ENCODE measurements at regions of chr19 and their contacts with region 1.

Region 1: DNA sequence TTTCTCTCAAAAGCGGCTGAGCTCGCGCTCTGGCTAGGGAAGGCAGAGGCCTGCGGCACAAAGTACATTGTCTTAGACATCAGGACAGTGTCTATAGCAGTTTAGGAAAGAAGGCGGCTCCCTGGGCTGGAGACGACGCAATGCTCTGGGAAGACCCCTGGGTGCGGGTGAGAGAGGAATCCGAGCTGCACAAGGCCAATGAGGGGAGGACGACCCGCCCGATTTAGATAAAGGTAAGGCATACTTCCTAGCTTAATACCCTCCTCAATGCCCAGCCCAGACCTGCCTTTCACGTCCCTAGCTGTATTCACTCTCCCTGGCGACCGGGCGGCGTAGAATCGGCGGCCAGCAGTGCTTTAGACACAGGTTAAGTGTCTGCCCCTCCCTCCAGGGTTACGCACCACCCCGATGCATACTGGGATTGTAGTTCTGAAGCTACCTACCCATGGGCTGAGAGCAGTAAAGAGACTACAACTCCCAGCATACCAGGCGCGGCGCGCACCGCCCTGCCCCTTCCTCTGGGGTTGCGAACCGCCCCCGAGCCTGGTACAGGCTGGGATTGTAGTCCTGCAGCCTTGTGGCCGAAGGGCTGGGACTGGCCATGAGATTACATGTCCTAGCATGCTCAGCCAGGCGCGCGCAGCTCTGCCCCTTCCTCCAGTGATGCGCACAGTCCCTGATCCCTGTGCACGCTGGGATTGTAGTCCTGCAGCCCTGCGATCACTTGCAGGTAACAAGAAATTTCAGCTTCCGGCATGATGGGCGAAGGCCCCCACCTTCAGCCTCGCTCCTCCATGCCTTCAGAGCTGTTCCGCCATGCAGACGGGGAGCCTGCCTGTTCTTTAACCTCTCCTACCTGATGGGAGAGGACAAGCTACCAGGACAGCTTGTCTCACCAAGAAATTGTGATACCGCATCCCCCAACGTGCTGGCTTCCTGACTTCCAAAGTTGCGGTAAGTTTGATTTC is 43.4 kb upstream of the ZNF14 start:
- DNase-seq: peak; percentile 94
- H3K4me3 Mint-ChIP-seq: peak overlapping the region; percentile 82
- H3K27ac Mint-ChIP-seq: peak overlapping the region; percentile 69
- H3K4me1 Mint-ChIP-seq: no peaks in the 10 kb centered on the region
- H3K27me3 Mint-ChIP-seq: no peaks in the 10 kb centered on the region
- CTCF ChIP-seq: no peak

Region 2: GRCh38 chr19:18021121-18021755 is 1755.1 kb before region 1 on chr19:
- CTCF ChIA-PET with region 1: no interaction called
- intact Hi-C with region 1: no loop called
- DNase-seq: peak; percentile 83
- H3K4me3 Mint-ChIP-seq: no peak overlapping the region
- H3K27ac Mint-ChIP-seq: peak overlapping the region; percentile 82
- H3K4me1 Mint-ChIP-seq: peaks cover 31% of the 10 kb centered on the region
- H3K27me3 Mint-ChIP-seq: no peaks in the 10 kb centered on the region
- CTCF ChIP-seq: no peak

Region 3: DNA sequence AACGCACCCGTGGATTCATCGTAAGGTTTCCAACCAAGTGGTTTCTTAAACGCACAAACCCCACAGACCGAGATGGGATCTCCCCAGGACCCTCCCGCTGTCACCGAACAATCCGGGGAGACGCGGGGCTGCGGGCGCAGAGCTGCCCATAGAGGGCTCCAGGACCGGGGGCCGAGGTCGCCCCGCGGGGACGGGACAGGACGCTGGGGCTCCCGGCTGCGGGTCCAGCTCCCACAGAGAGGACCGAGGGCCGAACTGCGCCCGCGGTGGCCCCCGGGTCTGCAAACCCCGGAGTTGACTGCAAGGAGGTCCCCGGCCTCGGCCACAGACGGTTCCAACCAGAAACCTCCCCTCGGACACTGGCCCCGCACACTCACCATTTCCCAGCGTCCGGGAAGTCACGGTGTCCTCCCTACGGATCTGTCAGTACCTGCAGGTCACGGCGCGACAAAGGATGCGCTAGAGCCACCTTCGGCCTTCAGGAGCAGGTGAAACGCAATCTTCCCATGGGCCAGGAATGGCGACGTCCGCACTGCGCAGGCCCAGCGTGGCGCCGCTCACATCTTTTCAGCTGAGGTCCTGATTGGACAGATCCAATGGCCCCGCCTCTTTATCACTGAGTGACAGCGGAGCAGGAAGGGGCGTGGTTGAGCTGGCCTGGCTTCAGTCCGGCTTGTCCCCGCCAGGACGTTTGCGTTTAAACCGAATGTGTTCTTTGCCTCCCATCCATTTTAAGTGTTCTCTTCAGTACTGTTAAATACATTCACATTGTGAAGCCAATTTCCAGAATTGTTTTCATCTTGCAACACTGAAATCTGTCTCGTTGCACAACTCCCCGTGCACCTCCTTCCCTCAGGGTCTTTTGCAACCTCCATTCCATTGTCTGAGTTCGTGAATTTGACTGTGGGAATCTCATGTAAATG is 43.5 kb before region 1 on chr19 and contains the start of gene ZNF14:
- CTCF ChIA-PET with region 1: interaction called, 3 read pairs
- intact Hi-C with region 1: loop called (anchors 5 kb)
- DNase-seq: peak; percentile 85
- H3K4me3 Mint-ChIP-seq: peak within 1 kb of the TSS; percentile 87
- H3K27ac Mint-ChIP-seq: peak within 1 kb of the TSS; percentile 89
- H3K4me1 Mint-ChIP-seq: no peaks in the 10 kb centered on the region
- H3K27me3 Mint-ChIP-seq: no peaks in the 10 kb centered on the region
- CTCF ChIP-seq: no peak
- total RNA-seq, gene ZNF14: 2.8 and 3.1 TPM in 2 replicates

Region 4: DNA sequence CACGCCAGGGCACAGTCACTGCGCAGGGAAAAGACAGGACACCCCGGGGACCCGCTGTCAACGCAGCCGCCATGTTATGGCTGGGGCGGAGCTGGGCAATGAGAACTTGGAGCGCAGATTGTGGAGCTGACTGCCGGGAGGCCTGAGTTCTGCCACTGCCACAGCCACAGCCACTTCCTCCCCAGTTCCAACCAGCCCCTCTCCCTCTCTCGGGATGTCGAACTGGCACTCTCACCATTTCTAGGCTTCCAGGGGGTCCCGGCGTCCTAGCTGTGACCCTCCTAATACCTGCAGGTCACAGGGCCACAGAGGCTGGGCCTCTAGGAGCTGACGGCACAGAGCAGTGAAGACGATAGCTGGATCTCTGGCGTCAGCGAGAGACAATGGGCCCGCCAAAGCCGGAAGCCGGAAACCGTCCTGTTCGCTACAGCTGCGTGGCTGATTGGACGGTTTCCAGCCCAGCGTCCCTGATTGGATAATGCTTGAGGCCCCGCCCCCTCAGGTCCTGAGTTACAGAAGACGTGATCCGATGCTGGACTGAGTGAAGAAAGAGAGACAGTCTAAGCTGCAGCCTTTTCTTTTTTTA is 45.1 kb after region 1 on chr19 and contains the start of gene ZNF506:
- CTCF ChIA-PET with region 1: no interaction called
- intact Hi-C with region 1: loop called (anchors 5 kb)
- DNase-seq: peak; percentile 92
- H3K4me3 Mint-ChIP-seq: peak within 1 kb of the TSS; percentile 85
- H3K27ac Mint-ChIP-seq: peak within 1 kb of the TSS; percentile 85
- H3K4me1 Mint-ChIP-seq: no peaks in the 10 kb centered on the region
- H3K27me3 Mint-ChIP-seq: no peaks in the 10 kb centered on the region
- CTCF ChIP-seq: no peak
- total RNA-seq, gene ZNF506: 14.9 and 16.4 TPM in 2 replicates

Measured in Calu3 (cell line).